ENCODE measurements at regions of chr5 and their contacts with region 1.

Region 1: GRCh38 chr5:122586351-122586750 is 188.5 kb upstream of the SNX2 start:
- DNase-seq: no peak
- H3K4me3 ChIP-seq: no peak overlapping the region
- H3K27ac ChIP-seq: no peak overlapping the region
- H3K4me1 ChIP-seq: no peaks in the 10 kb centered on the region
- H3K27me3 ChIP-seq: peaks cover 0 to 3% (median 0%) of the 10 kb centered on the region in 5 experiments

Region 2: GRCh38 chr5:122311961-122312590 is 274.3 kb before region 1 on chr5 and contains the start of gene SNCAIP:
- CTCF ChIA-PET with region 1: no interaction called
- POLR2A ChIA-PET with region 1: interaction called, 12 read pairs
- DNase-seq: peak in 2 of 3 donors; percentile 37 to 57
- H3K4me3 ChIP-seq: peak within 1 kb of the TSS; percentile 12 to 84 (median 65)
- H3K27ac ChIP-seq: no peak within 1 kb of the TSS
- H3K4me1 ChIP-seq: peaks cover 7 to 20% (median 16%) of the 10 kb centered on the region in 4 experiments
- H3K27me3 ChIP-seq: peaks cover 8 to 72% (median 25%) of the 10 kb centered on the region in 5 experiments

Region 3: GRCh38 chr5:122673343-122673742 is 87.0 kb after region 1 on chr5:
- CTCF ChIA-PET with region 1: no interaction called
- POLR2A ChIA-PET with region 1: no interaction called
- DNase-seq: no peak
- H3K4me3 ChIP-seq: no peak overlapping the region
- H3K27ac ChIP-seq: no peak overlapping the region
- H3K4me1 ChIP-seq: no peaks in the 10 kb centered on the region
- H3K27me3 ChIP-seq: no peaks in the 10 kb centered on the region

Measured in common myeloid progenitor, CD34-positive (primary cell).